ENCODE measurements at regions of chr7 and their contacts with region 1.

Region 1: GRCh38 chr7:44082541-44083207 is 344 bp upstream of the POLM start:
- DNase-seq: peak; percentile 88 to 99 (median 98)
- ATAC-seq: peak; percentile 90 to 93
- H3K4me3 Mint-ChIP-seq: peak overlapping the region; percentile 80 to 94 (median 87)
- H3K27ac Mint-ChIP-seq: peak overlapping the region; percentile 25 to 95 (median 88)
- H3K4me1 Mint-ChIP-seq: peaks cover 13 to 44% (median 30%) of the 10 kb centered on the region in 4 donors
- H3K27me3 Mint-ChIP-seq: no peaks in the 10 kb centered on the region

Region 2: DNA sequence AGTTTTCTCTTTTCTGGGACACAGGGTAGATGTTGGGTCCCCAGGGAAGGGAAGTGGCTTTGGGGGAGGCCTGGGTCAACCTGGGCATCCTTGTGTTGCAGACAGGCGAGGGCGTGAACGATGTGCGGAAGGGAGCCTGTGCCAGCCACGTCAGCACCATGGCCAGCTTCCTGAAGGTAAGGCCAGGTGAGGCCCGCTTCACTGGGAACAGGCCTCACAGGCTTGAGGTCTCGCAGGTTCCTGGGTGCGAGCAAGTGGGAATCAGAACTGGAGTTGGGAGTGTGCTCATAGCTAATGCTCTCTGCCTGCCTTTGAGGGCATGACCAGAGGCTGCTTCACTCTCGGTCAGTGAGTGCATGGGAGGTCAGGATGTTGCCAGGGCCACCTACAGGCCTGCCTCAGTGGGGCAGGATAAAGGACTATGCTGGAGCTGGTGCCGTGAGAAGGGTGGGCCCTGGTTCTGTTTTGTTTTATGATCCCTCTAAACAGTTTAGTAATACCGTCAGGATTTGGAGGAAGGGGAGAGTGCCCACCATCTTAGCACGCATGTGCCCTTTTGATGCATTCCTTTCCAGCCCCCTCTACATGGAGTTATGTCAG is 29.8 kb before region 1 on chr7:
- POLR2A ChIA-PET with region 1: interaction called, 18 read pairs
- DNase-seq: no peak
- ATAC-seq: no peak
- H3K4me3 Mint-ChIP-seq: peak overlapping the region in 4 of 10 donors; percentile 10 to 38 (median 26)
- H3K27ac Mint-ChIP-seq: peak overlapping the region in 8 of 10 donors; percentile 48 to 88 (median 80)
- H3K4me1 Mint-ChIP-seq: peaks cover 30 to 77% (median 71%) of the 10 kb centered on the region in 4 donors
- H3K27me3 Mint-ChIP-seq: no peaks in the 10 kb centered on the region

Region 3: GRCh38 chr7:44065436-44066118 is 17.1 kb before region 1 on chr7 and contains the start of gene PGAM2:
- POLR2A ChIA-PET with region 1: interaction called, 56 read pairs
- DNase-seq: no peak
- ATAC-seq: peak; percentile 44 to 60
- H3K4me3 Mint-ChIP-seq: peak within 1 kb of the TSS in 4 of 10 donors; percentile 26 to 54 (median 33)
- H3K27ac Mint-ChIP-seq: peak within 1 kb of the TSS; percentile 53 to 92 (median 77)
- H3K4me1 Mint-ChIP-seq: peaks cover 23 to 41% (median 38%) of the 10 kb centered on the region in 4 donors
- H3K27me3 Mint-ChIP-seq: no peaks in the 10 kb centered on the region
- polyA plus RNA-seq, gene PGAM2: not detected

Region 4: DNA sequence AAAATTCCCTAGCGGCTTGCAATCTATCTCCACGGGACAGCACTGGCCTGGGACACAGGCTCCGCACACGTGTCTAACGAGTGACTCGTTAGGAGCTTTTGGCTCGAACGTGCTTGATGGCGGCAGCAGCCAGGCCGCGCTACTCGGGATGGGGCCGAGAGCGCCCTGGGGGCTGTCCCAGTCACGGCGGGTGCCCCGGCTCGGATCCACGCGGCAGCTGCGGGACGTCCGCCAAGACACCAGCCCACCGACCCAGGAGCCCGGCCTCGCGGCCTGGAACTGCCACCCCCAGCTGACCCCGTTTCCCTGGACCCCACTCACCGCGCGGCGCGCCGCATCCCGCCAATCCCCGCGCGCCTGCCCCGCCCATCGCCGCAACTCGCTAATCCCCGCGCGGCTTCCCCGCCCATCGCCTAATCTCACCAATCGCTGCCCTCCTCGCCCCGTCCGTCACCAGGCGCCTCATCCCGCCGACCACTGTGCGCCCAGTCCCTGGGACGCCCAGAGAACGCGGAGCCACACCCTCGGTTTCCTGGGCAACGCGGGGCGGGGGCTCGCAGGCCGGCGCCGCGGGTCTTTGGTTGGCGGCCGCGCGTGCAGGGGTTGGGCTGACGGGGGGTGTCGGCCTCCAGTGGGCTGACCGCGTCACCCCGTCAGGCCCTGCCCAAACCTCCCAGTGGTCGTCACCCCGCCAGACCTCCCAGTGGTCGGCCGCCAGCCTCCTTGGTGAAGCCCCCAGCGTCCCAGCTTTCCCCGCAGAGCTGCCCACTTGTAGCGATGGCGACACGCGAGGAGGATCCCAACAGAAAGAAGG is 40.7 kb after region 1 on chr7 and contains the start of gene POLD2:
- POLR2A ChIA-PET with region 1: interaction called, 12 read pairs
- DNase-seq: peak; percentile 93 to 98 (median 96)
- ATAC-seq: peak; percentile 97 to 98
- H3K4me3 Mint-ChIP-seq: peak within 1 kb of the TSS; percentile 80 to 97 (median 92)
- H3K27ac Mint-ChIP-seq: peak within 1 kb of the TSS; percentile 79 to 97 (median 92)
- H3K4me1 Mint-ChIP-seq: peaks cover 14 to 41% (median 36%) of the 10 kb centered on the region in 4 donors
- H3K27me3 Mint-ChIP-seq: no peaks in the 10 kb centered on the region
- polyA plus RNA-seq, gene POLD2: 64.3 to 102 (median 89.4) TPM

Region 5: DNA sequence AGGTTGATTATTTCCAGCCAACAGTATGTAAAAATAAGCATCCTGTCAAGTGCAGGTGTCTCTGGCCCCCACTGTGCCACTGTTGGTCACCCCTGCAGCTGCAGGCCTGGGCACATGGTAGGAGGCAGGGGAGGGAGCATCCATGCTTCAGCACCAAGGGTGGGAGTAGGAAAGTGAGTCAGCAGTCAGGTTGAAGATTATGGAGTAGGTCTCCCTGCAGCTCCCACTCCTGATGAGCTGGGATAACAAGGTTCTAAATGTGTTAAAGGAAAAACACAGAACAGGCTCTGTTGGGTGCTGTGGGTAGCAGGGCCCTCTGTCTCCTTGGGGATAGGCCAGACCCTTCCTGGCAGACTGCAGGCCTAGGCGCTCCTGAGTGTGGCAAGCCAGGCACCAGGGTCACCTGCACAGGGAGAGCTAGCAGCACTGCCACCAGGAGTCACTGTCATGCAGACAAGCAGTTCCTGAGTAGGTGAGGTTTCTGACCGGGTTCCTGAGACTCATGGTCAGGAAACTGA is 348.5 kb after region 1 on chr7:
- POLR2A ChIA-PET with region 1: no interaction called
- DNase-seq: peak in 8 of 10 donors; percentile 7 to 25 (median 14)
- ATAC-seq: peak; percentile 44 to 65
- H3K4me3 Mint-ChIP-seq: no peak overlapping the region
- H3K27ac Mint-ChIP-seq: peak overlapping the region in 5 of 10 donors; percentile 47 to 86 (median 50)
- H3K4me1 Mint-ChIP-seq: peaks cover 36 to 68% (median 49%) of the 10 kb centered on the region in 4 donors
- H3K27me3 Mint-ChIP-seq: no peaks in the 10 kb centered on the region